ENCODE measurements at regions of chr2 and their contacts with region 1.

Region 1: DNA sequence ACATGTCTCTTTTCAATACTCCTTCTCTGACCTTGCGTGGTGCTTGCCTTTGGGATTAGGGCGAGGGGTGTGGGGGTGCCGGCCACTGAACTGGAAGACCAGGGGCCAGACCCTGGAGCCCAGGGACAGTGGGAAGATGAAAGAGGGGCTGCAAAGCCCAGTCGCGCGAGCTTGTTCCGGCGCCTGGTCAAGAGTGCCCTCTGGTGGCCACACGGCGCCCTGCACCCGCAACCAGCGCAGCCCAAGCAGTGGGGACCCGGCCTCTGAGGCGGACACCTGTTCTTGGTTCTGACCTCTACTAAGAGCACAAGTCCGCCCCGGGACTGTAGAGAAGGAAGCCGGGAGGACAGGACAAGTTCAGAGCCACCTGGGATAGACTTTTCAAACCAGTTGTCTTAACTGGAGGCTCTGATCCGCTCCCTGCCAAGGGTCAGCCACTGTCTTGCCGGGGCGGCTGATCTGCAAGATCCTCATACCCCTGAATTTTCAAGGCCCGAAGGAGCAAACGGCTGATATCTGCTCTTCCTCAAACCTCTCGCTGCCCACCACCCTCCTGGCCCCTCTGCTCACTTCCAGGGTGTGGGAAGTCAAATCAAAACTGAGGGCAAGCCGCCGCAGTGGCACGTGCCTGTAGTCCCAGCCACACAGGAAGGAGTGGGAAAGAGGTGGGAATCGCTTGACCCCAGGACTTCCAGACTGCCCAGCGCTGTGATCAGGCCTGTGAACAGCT is 14.9 kb upstream of the MSH6 start:
- DNase-seq: peak; percentile 55 to 67
- ATAC-seq: peak; percentile 87 to 94
- H3K4me3 ChIP-seq: no peak overlapping the region
- H3K27ac ChIP-seq: peak overlapping the region in 1 of 2 experiments; percentile 58; a peak in 2 of 6 replicates
- H3K4me1 ChIP-seq: no peaks in the 10 kb centered on the region
- CTCF ChIP-seq: peak; percentile 98
- EP300 ChIP-seq: no peak
- POLR2A ChIP-seq: no peak
- RAD21 ChIP-seq: peak; percentile 96 to 99

Region 2: DNA sequence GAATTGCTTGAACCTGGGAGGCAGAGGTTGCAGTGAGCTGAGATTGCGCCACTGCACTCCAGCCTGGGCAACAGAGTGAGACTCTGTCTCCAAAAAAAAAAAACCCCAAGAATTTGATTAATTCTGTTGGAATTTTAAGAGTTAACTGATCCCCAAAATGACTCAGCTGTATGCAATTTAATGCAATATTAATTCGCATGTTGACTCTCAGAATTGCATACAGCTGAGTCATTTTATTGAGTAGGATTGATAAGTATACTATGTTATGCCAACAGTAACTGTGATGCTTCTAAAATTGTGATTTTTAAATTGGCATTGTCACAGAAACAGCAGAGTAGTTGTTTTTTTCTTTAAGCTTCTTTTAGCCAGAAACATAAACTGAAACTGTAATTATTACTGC is 345.5 kb before region 1 on chr2:
- CTCF ChIA-PET with region 1: interaction called, 15 read pairs
- POLR2A ChIA-PET with region 1: no interaction called
- DNase-seq: peak; percentile 23 to 29
- ATAC-seq: peak in 1 of 2 experiments; percentile 72; a peak in 3 of 6 replicates
- H3K4me3 ChIP-seq: no peak overlapping the region
- H3K27ac ChIP-seq: peak overlapping the region in 1 of 2 experiments; percentile 65; a peak in 3 of 6 replicates
- H3K4me1 ChIP-seq: peaks cover 11% of the 10 kb centered on the region; the same call in 2 of the 3 replicates
- CTCF ChIP-seq: no peak
- EP300 ChIP-seq: no peak
- POLR2A ChIP-seq: no peak
- RAD21 ChIP-seq: no peak

Region 3: DNA sequence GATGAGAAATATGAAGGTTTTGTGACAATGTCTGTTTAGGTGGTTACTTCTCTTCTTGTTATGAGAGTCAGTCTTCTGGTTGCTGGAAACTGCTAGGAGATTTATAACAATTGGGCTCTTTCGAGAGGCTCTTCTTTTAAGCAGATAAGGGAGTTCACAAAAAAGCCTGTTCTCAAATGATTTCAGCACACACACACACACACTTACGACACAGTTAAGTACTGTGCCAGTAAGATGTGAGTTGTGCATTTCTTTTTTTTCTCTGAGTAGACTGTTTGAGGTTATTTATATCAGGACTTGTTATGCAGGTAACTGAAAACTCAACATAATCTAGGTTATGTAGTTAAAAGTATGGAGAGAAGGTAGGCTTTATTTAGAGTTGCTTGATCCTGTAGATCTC is 315.3 kb before region 1 on chr2:
- CTCF ChIA-PET with region 1: interaction called, 13 read pairs
- POLR2A ChIA-PET with region 1: no interaction called
- DNase-seq: no peak
- ATAC-seq: no peak
- H3K4me3 ChIP-seq: no peak overlapping the region
- H3K27ac ChIP-seq: no peak overlapping the region
- H3K4me1 ChIP-seq: no peaks in the 10 kb centered on the region
- CTCF ChIP-seq: no peak
- EP300 ChIP-seq: no peak
- POLR2A ChIP-seq: no peak
- RAD21 ChIP-seq: no peak

Region 4: DNA sequence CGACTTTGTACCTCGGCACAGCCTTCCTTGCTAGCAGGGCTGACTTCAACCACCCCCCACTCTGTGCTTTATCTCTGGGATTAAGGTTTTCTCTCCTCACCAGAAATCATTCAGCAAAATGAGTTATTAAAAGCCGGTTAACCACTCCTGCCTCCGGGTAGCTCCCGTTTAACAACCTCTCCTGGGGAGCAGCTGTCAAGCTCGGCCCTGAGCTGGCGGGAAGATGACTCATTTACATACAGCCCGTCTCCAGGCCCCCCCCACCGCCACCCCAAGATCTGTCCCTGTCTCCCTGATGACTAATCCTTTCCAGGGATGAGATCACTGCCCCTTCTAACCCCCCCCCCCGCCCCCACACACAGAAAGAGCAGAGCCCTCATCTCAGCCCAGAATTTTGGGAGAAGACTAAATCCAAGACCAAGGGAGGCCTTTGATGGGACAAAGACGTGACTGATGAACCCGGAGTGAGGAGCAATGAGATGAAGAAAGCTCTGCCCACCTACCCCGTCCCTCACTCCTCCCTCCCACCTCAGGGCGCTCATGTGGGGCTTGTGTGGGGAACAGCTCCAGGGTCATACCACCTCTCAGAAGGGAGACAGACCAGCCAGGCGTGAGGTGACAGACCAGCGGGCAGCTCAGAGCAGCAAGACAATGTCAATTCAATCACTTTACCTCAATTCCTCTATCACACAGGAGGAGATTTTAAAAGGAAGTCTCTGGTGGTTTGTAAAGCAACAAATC is 233.7 kb before region 1 on chr2:
- CTCF ChIA-PET with region 1: interaction called, 17 read pairs
- POLR2A ChIA-PET with region 1: no interaction called
- DNase-seq: peak in 1 of 2 experiments; percentile 26
- ATAC-seq: peak; percentile 50 to 55
- H3K4me3 ChIP-seq: no peak overlapping the region
- H3K27ac ChIP-seq: no peak overlapping the region; a peak in 1 of 6 replicates
- H3K4me1 ChIP-seq: peaks cover 5% of the 10 kb centered on the region; the same call in 1 of the 3 replicates
- CTCF ChIP-seq: no peak
- EP300 ChIP-seq: no peak
- POLR2A ChIP-seq: no peak
- RAD21 ChIP-seq: no peak

Region 5: GRCh38 chr2:47744074-47744473 is 24.0 kb before region 1 on chr2:
- CTCF ChIA-PET with region 1: interaction called, 13 read pairs
- POLR2A ChIA-PET with region 1: no interaction called
- DNase-seq: no peak
- ATAC-seq: no peak
- H3K4me3 ChIP-seq: no peak overlapping the region
- H3K27ac ChIP-seq: no peak overlapping the region
- H3K4me1 ChIP-seq: no peaks in the 10 kb centered on the region
- CTCF ChIP-seq: no peak
- EP300 ChIP-seq: no peak
- POLR2A ChIP-seq: no peak
- RAD21 ChIP-seq: no peak

Measured in A549 (cell line).